Activated T-helper 2 cell treated with anti-CD3 and anti-CD28 coated beads, Interferon-gamma antibody, Interleukin-2, Interleukin-4, amounts not matched to agents 10 μg/mL and 5 μg/mL and 100 μg/mL, durations not matched to agents 14 hours and 24 hours and 36 hours (primary cell): ENCODE measurements at regions of chrX and their contacts with region 1.

Region 1: GRCh38 chrX:13077168-13077567 is 32.7 kb upstream of the FAM9C start:
- DNase-seq: peak; percentile 19
- H3K4me3 Mint-ChIP-seq: no peak overlapping the region
- H3K27ac Mint-ChIP-seq: peak overlapping the region; percentile 90
- H3K4me1 Mint-ChIP-seq: peaks cover 56% of the 10 kb centered on the region
- H3K27me3 Mint-ChIP-seq: no peaks in the 10 kb centered on the region

Region 2: GRCh38 chrX:12929701-12930100 is 147.5 kb before region 1 on chrX:
- intact Hi-C with region 1: no loop called
- DNase-seq: no peak
- H3K4me3 Mint-ChIP-seq: no peak overlapping the region
- H3K27ac Mint-ChIP-seq: no peak overlapping the region
- H3K4me1 Mint-ChIP-seq: peaks cover 4% of the 10 kb centered on the region
- H3K27me3 Mint-ChIP-seq: peaks cover 3% of the 10 kb centered on the region

Region 3: DNA sequence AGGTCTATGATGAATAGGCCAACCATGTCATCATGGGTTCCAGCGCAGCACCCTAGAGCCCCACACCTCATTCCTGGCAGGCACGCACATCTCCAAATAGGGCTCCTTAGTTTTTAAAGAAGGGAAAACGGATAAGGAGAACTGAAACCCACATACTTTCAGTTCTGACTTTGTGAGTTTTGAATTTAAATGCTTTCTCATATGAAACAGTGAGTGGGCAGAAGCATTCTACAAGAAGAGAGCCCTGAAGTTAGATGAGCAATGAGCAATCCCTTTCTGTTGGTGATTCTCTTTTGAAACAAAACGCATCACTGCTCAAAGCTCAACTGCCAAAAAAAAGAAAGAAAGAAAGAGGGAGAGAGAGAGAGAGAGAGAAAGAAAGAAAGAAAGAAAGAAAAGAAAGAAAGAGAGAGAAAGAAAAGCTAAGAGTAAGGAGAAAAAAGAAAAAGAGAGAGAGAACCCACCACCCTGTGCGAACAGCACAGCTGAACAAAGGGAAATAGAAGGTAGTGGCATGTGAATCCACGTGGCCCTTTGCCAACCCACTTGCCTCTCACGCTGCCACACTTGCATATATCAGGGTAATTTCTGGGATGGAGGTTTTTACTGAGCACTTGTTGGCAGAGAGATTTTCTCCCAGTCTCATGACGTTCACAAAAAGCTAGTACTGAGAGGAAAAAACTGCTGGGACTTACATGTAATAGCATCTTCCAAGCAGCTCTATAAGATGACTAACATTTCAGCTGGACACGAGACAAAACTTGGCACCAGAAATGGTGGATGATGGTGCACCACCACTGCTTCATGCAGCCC is 71.3 kb before region 1 on chrX:
- intact Hi-C with region 1: loop called (anchors 2 kb)
- DNase-seq: no peak
- H3K4me3 Mint-ChIP-seq: peak overlapping the region; percentile 87
- H3K27ac Mint-ChIP-seq: peak overlapping the region; percentile 100
- H3K4me1 Mint-ChIP-seq: peaks cover 60% of the 10 kb centered on the region
- H3K27me3 Mint-ChIP-seq: no peaks in the 10 kb centered on the region

Region 4: DNA sequence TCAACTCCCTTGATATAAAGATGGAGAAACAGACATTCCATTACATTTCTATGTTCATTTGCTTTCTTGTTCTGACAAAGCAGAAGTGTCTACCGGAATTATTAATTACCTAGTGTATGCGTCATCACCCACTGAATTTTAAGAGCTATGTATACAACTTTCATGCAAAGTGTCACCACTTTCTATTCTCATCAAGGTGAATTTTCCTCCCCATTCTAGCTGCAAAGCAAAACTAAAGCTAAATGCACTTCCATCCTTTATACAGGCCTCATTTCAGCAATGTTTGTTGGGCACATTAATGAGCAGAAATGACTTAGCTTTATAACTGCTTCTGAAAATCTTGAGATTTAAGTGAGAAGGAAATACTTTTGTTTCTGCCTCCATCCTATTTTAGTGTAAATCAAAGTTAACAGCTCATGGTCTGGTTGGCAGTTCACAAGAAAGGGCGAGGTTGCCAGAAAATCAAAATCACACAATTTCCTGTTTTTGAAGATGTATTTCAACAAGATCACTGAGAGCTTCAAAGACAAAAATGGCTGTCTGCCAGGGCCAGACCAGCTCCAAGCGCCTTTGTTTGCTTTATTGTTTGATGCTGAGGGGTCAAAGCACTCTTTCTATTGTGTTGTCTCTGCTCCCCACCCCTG is 25.5 kb before region 1 on chrX:
- intact Hi-C with region 1: loop called (anchors 1 kb)
- DNase-seq: no peak
- H3K4me3 Mint-ChIP-seq: no peak overlapping the region
- H3K27ac Mint-ChIP-seq: peak overlapping the region; percentile 85
- H3K4me1 Mint-ChIP-seq: peaks cover 34% of the 10 kb centered on the region
- H3K27me3 Mint-ChIP-seq: no peaks in the 10 kb centered on the region

Region 5: DNA sequence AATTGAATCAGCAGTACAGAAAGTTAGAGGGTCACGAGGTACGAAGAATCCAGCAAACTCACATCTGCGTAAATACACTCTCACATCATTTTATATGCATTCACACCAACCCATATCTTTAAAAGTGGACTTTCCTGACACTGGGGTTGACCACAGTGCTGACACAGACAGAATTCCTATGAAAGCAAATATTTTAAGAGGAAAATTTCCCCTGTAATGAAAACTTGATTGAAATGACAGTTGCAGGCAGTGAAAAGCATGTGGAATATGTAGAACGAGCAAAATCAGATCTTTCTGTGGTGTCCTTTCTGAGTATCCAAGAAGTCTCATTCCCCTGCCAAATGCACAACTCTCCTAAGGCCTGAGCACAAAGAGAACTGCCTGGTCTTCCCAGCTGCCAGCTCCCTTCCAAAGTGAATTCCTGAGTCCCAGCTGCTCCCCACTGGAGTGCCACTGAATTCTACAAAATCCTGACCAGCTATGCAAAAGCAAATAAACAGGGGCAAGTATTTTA is 17.7 kb after region 1 on chrX:
- intact Hi-C with region 1: no loop called
- DNase-seq: no peak
- H3K4me3 Mint-ChIP-seq: no peak overlapping the region
- H3K27ac Mint-ChIP-seq: peak overlapping the region; percentile 69
- H3K4me1 Mint-ChIP-seq: peaks cover 63% of the 10 kb centered on the region
- H3K27me3 Mint-ChIP-seq: no peaks in the 10 kb centered on the region